Activated CD4-positive, alpha-beta T cell treated with anti-CD3 and anti-CD28 coated beads, Interleukin-2, amount 10 ng/mL, durations not matched to agents 7 days and 5 days (primary cell): ENCODE measurements at regions of chr2 and their contacts with region 1.

Region 1: DNA sequence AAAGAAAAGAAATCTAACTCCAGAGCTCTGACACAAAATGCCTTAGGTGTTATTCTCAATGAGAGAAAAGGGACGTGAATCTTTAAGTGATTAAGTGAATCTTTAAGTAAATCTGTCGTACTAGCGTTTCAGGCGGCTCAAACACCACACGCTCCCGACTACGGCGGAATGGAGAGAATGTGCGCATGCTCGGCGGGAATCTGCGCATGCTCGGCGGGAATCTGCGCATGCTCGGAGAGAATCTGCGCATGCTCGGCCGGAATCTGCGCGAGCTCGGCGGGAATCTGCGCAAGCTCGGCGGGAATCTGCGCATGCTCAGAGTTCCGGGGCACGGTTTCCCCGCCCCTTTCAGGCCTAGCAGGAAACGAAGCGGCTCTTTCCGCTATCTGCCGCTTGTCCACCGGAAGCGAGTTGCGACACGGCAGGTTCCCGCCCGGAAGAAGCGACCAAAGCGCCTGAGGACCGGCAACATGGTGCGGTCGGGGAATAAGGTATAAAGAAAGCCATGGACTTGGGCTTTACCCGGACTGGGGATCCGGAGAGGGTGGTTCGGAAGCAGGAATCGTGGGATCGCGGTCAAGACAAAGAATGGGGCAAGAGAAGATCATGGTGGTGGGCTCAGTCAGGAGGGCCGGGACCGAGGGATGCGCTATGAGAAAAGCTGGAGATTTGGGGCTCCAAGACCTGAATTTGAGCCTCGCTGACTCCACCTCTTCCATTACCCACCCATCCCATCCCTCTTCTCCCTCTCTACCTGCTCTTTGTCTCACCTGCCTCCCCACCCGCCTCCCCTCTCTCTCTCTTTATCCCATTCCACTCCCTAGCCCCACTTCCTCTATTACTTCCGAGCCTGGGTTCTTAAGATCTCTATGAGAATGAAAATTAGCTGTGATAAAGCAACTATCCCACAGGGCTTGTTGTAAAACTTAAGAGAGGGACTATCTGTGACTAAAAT is at the start of gene XRCC5:
- DNase-seq: peak; percentile 97
- H3K4me3 Mint-ChIP-seq: peak within 1 kb of the TSS; percentile 99
- H3K27ac Mint-ChIP-seq: peak within 1 kb of the TSS; percentile 98
- H3K4me1 Mint-ChIP-seq: peaks cover 59% of the 10 kb centered on the region
- H3K27me3 Mint-ChIP-seq: no peaks in the 10 kb centered on the region
- total RNA-seq, gene XRCC5: 292 to 331 TPM

Region 2: DNA sequence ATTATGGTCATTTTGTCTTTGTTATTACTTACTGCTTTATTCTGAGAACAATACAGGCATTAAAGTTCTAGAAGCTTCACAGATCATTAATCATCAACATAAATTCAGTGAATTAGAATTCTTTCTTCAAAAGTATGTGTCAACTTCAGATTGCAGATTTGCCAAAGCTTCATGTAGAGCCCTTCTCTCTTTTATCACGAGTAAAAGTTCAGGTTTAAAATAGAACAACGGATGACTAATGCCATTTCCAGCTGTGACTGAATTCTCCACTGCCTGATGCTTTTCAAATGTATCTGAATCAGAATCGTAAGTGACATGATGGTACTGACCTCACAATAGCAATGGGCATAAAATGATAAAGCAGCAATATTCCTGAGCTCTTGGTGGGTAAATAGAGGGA is 1086.8 kb before region 1 on chr2:
- CTCF ChIA-PET with region 1: no interaction called
- POLR2A ChIA-PET with region 1: no interaction called
- DNase-seq: no peak
- H3K4me3 Mint-ChIP-seq: no peak overlapping the region
- H3K27ac Mint-ChIP-seq: no peak overlapping the region
- H3K4me1 Mint-ChIP-seq: no peaks in the 10 kb centered on the region
- H3K27me3 Mint-ChIP-seq: no peaks in the 10 kb centered on the region

Region 3: DNA sequence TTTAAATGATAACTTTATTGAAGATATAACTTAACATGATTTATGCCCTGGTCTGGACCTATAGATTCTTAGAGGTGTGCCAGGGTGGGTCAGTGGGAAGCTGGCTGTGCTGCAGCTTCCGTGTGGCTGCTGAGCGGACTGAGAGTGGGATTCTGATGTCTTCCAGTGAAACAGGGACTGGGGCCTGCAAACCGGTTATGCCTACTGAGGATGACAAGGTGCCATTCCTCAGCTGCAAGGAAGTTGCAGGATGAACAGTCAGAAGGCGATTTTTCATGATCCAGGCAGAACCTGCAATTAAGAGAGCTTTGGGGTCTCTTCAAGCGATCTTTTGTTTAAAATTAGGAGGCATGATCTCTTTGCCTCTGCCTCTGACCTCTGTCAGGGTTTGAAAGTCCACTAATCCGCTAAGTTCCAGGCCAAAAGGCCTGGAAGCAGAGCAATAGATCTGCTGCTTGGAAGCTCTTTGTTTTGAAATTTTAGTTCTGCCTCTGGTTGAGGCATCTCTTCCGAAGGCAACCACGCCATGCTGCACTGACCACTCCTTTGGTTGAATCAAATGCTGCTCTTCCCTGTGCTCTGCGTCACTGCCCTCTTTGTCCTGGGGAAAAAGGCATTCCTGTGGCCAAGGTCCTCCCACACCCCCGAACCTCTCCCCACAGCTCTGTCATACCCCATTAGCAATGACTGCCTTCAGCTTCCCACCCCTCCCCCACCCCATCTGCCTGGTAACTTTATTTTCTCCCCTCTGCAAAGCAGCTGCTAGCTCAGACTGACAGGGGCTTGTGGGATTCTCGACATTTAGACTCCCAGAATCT is 25.6 kb before region 1 on chr2:
- CTCF ChIA-PET with region 1: interaction called, 14 read pairs
- POLR2A ChIA-PET with region 1: interaction called, 5 read pairs
- DNase-seq: no peak
- H3K4me3 Mint-ChIP-seq: peak overlapping the region; percentile 93
- H3K27ac Mint-ChIP-seq: peak overlapping the region; percentile 94
- H3K4me1 Mint-ChIP-seq: peaks cover 58% of the 10 kb centered on the region
- H3K27me3 Mint-ChIP-seq: no peaks in the 10 kb centered on the region

Region 4: DNA sequence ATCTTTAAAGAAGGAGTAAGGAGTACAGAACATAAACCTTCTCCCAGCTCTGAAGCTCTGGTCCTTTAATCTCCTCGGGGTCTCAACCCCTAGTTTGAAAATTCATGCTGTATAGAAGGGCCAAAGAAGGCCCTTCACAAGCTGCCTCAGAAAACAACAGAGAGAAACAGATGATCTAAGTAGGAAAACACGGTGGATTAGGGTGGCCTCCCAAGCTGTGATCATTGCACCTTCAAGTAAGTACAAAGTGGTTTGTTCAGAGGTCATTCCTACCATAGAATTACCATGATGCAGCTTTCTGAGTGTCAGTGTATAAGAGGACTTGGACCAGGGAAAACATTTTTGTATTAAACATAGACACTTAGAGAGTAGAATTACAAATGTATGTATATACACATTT is 16.6 kb before region 1 on chr2:
- CTCF ChIA-PET with region 1: interaction called, 16 read pairs
- POLR2A ChIA-PET with region 1: no interaction called
- DNase-seq: no peak
- H3K4me3 Mint-ChIP-seq: no peak overlapping the region
- H3K27ac Mint-ChIP-seq: no peak overlapping the region
- H3K4me1 Mint-ChIP-seq: peaks cover 16% of the 10 kb centered on the region
- H3K27me3 Mint-ChIP-seq: no peaks in the 10 kb centered on the region

Region 5: GRCh38 chr2:216206041-216206703 is 96.9 kb after region 1 on chr2:
- CTCF ChIA-PET with region 1: no interaction called
- POLR2A ChIA-PET with region 1: no interaction called
- DNase-seq: peak; percentile 4
- H3K4me3 Mint-ChIP-seq: no peak overlapping the region
- H3K27ac Mint-ChIP-seq: no peak overlapping the region
- H3K4me1 Mint-ChIP-seq: peaks cover 26% of the 10 kb centered on the region
- H3K27me3 Mint-ChIP-seq: no peaks in the 10 kb centered on the region